ENCODE measurements at regions of chr7 and their contacts with region 1.

Region 1: DNA sequence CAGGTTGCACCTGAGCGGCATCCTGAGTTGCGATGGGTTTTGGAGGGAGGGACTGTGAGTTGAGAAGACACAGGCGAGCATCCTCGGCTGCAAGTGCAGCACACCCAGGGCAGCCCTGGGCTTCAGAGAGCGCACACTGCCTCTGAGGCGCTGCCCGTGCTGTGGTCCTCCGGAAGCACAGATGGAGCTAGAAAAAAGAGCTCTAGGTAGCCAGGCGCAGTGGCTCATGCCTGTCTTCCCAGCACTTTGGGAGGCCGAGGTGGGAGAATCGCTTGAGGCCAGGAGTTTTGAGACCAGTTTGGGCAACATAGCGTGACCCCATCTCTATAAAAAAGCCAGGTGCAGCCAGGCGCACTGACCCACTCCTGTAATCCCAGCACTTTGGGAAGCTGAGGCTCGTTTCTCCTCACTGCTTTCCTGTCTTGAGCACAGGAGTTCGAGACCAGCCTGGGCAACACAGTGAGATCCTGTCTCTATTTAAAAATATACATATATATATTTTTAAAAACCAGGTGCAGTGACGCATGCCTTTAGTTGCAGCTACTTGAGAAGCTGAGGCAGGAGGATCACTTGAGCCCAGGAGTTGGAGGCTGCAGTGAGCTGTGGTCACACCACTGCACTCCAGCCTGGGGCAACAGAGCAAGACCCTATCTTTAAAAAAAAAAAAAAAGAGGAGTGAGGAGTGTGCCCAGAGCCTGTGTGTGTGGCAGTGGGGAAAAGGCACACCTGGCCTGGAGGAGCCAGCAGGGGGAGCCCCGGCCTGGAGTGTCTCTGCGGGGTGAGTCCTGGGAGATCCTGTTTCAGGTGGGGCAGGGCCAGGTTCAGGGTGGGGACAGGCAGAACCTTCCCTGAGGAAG is 9.3 kb upstream of the ARPC1B start:
- DNase-seq: peak; percentile 56 to 82 (median 69)
- ATAC-seq: peak; percentile 97
- H3K4me3 ChIP-seq: no peak overlapping the region
- H3K4me3 Mint-ChIP-seq: no peak overlapping the region
- H3K27ac ChIP-seq: no peak overlapping the region
- H3K27ac Mint-ChIP-seq: no peak overlapping the region
- H3K4me1 ChIP-seq: peaks cover 7% of the 10 kb centered on the region
- H3K4me1 Mint-ChIP-seq: no peaks in the 10 kb centered on the region
- H3K27me3 ChIP-seq: no peaks in the 10 kb centered on the region
- H3K27me3 Mint-ChIP-seq: no peaks in the 10 kb centered on the region
- CTCF ChIP-seq: peak; percentile 73

Region 2: DNA sequence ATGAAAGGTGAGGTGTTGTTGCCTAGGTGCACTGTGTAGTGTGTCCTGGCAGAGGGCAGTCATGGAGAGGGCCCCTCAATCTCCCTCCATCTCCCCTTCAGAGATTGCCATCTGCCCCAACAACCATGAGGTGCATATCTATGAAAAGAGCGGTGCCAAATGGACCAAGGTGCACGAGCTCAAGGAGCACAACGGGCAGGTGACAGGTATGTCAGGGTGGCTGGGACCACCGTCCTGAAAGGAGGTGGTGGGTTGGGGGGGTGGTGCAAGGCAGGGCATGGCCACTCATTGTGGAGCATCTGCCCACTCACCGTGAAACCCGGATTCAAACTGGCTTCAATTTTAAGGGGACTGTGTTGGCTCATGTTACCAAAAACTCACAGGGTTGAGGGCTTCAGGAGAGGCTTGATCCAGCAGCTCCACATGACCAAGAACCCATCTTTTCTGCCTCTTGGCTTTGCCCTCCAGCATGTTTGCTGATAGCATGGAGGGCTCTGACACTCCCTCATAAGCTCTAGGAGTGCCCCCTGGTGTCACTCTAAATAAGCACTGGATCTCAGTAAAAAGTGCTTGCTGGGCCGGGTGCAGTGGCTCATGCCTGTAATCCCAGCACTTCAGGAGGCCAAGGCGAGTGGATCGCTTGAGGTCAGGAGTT is 21.5 kb after region 1 on chr7:
- CTCF ChIA-PET with region 1: interaction called, 13 read pairs
- POLR2A ChIA-PET with region 1: interaction called, 6 read pairs
- intact Hi-C with region 1: loop called (anchors 1 kb)
- DNase-seq: peak in 7 of 14 experiments; percentile 16 to 76 (median 46)
- ATAC-seq: peak; percentile 82
- H3K4me3 ChIP-seq: no peak overlapping the region
- H3K4me3 Mint-ChIP-seq: peak overlapping the region; percentile 67
- H3K27ac ChIP-seq: peak overlapping the region in 1 of 2 donors; percentile 31
- H3K27ac Mint-ChIP-seq: peak overlapping the region; percentile 81
- H3K4me1 ChIP-seq: peaks cover 47% of the 10 kb centered on the region
- H3K4me1 Mint-ChIP-seq: peaks cover 27% of the 10 kb centered on the region
- H3K27me3 ChIP-seq: no peaks in the 10 kb centered on the region
- H3K27me3 Mint-ChIP-seq: no peaks in the 10 kb centered on the region
- CTCF ChIP-seq: no peak

Region 3: DNA sequence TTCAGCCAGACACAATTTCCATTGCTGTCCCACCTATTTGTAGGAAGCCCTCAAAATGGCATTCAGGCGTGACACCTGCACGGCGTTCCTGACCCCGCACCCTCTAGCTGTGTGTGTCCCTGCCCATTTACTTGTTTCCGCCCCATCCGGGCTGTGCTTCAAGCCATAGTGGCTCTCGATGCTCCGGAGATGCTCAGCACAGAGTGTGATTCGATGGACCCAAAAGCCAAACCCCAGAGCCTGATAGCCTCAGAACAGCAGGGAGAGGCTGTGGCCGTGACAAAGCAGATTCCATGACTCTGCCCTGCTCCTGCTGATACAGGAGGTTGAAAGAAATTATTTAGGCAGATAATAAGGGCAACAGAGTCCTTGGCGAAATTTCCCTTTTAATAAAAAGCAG is 57.0 kb after region 1 on chr7:
- CTCF ChIA-PET with region 1: no interaction called
- POLR2A ChIA-PET with region 1: no interaction called
- intact Hi-C with region 1: loop called in 1 of 2 experiments (anchors 2 kb)
- DNase-seq: no peak
- ATAC-seq: no peak
- H3K4me3 ChIP-seq: no peak overlapping the region
- H3K4me3 Mint-ChIP-seq: no peak overlapping the region
- H3K27ac ChIP-seq: no peak overlapping the region
- H3K27ac Mint-ChIP-seq: no peak overlapping the region
- H3K4me1 ChIP-seq: no peaks in the 10 kb centered on the region
- H3K4me1 Mint-ChIP-seq: no peaks in the 10 kb centered on the region
- H3K27me3 ChIP-seq: no peaks in the 10 kb centered on the region
- H3K27me3 Mint-ChIP-seq: no peaks in the 10 kb centered on the region
- CTCF ChIP-seq: no peak

Region 4: GRCh38 chr7:99579956-99580777 is 215.0 kb after region 1 on chr7:
- CTCF ChIA-PET with region 1: no interaction called
- POLR2A ChIA-PET with region 1: no interaction called
- intact Hi-C with region 1: loop called in 1 of 2 experiments (anchors 5 kb)
- DNase-seq: peak; percentile 32 to 78 (median 58)
- ATAC-seq: peak; percentile 90
- H3K4me3 ChIP-seq: peak overlapping the region; percentile 57
- H3K4me3 Mint-ChIP-seq: peak overlapping the region; percentile 92
- H3K27ac ChIP-seq: no peak overlapping the region
- H3K27ac Mint-ChIP-seq: peak overlapping the region; percentile 73
- H3K4me1 ChIP-seq: peaks cover 14% of the 10 kb centered on the region
- H3K4me1 Mint-ChIP-seq: peaks cover 26% of the 10 kb centered on the region
- H3K27me3 ChIP-seq: no peaks in the 10 kb centered on the region
- H3K27me3 Mint-ChIP-seq: no peaks in the 10 kb centered on the region
- CTCF ChIP-seq: peak; percentile 54

Region 5: DNA sequence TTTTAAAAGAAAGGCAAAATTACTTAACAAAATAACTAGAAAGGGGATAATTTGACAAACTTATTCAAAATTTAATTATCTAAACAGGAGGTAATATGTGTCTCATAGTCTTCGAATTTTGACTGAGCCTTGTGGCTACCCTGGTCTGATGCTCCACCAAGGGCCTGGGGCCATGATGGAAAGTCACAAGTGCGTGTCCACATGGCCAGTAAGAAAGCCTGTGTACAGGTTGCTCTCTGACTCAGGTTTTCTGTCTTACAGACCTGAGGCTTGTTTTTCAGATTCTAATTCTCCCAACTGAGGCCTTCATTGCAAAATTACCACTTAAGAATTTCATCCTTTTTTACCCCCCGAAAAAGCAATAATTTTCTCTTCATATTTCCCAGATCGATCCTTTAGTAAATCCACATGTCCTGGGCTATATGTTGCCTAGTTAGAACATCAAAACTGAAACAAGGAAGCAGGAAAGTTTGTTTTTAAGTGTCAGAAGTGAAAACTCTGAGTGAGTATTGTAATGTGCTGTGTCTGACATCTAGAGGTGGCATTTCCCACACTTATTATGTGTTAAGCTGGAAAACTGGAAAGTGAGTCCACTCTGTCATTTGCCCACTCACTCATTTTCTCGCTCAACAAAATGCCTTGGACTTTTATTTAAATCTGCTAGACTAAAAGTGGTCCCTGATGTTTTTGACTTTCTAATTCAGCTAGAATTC is 472.6 kb after region 1 on chr7:
- CTCF ChIA-PET with region 1: no interaction called
- POLR2A ChIA-PET with region 1: interaction called, 3 read pairs
- intact Hi-C with region 1: loop called in 1 of 2 experiments (anchors 10 kb)
- DNase-seq: peak in 1 of 14 experiments; percentile 12
- ATAC-seq: no peak
- H3K4me3 ChIP-seq: no peak overlapping the region
- H3K4me3 Mint-ChIP-seq: no peak overlapping the region
- H3K27ac ChIP-seq: no peak overlapping the region
- H3K27ac Mint-ChIP-seq: no peak overlapping the region
- H3K4me1 ChIP-seq: no peaks in the 10 kb centered on the region
- H3K4me1 Mint-ChIP-seq: peaks cover 8% of the 10 kb centered on the region
- H3K27me3 ChIP-seq: no peaks in the 10 kb centered on the region
- H3K27me3 Mint-ChIP-seq: peaks cover 3% of the 10 kb centered on the region
- CTCF ChIP-seq: no peak